GM13976 (cell line): ENCODE measurements at regions of chr20 and their contacts with region 1.

Region 1: DNA sequence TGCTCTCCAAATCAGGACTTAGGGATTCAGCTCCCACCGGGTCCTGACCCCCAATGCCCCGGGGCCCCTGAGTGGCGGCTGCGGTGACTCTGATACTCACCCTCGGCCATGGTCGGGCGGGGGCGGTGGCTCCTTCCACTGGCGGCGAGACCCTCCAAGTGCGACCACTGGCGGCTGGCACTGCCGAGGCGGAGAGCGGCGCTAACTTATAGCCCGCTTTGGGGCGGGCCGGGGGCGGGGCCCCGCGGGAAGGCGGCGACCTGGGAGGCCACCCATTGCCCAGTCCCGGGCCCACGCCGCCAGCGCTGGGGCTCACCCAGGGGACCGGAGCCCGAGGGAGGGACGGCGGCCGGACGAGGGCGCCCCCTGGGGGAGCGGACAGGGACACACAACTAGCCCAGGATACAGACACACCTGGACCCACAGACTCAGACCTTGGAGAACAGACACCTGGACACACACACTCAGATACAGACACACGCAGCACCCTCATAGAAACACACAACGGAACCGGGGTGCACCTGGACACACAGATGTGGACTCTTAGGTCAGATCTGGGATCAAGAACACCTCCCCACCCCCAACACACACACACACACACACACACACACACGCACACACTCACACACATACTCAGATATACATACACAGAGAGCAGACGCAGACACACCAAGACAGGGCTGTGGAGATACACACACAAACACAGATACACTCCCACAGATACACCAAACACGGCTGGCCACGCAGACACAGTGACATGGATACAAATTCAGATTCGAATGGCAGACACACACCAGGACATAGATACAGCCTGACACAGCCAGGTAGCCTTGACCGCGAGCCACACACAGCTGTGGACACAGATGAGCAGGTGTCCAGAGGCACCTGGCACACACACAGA is at the start of gene TGM2:
- DNase-seq: peak; percentile 90
- CTCF ChIP-seq: peak; percentile 91

Region 2: GRCh38 chr20:37680420-37680819 is 484.9 kb before region 1 on chr20:
- in situ Hi-C with region 1: no loop called
- DNase-seq: no peak
- CTCF ChIP-seq: no peak

Region 3: DNA sequence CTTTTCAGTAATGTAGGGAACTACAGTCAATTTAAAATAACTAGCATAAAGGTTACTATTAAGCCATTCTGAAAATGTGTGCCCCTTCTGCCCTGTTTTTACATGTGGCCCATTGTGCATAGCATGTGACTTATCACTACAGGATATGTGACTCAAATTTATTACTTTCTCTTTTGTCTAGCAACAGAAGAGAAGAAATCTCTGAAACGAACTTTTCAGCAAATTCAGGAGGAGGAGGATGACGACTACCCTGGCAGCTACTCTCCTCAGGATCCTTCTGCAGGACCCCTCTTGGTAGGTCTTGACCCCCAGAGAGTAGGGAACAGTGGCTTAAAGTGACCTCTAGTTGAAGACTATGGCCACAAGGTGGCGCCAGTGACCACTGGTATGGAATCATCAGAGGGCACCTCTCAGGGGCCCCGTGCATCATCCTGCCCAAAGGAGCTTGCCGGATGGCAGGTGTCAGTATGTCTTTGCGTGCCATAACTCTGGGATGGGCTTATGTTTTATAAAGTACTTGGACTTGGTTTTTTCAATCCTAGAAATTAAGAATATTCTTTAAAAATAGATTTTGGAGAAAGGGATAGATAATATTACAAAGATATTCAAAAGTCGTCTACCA is 107.9 kb before region 1 on chr20:
- in situ Hi-C with region 1: loop called (anchors 10 kb)
- DNase-seq: peak; percentile 69
- CTCF ChIP-seq: peak; percentile 58

Region 4: GRCh38 chr20:38304845-38305447 is 139.6 kb after region 1 on chr20:
- in situ Hi-C with region 1: no loop called
- DNase-seq: peak; percentile 60
- CTCF ChIP-seq: peak; percentile 34